ENCODE measurements at regions of chr3 and their contacts with region 1.

Region 1: DNA sequence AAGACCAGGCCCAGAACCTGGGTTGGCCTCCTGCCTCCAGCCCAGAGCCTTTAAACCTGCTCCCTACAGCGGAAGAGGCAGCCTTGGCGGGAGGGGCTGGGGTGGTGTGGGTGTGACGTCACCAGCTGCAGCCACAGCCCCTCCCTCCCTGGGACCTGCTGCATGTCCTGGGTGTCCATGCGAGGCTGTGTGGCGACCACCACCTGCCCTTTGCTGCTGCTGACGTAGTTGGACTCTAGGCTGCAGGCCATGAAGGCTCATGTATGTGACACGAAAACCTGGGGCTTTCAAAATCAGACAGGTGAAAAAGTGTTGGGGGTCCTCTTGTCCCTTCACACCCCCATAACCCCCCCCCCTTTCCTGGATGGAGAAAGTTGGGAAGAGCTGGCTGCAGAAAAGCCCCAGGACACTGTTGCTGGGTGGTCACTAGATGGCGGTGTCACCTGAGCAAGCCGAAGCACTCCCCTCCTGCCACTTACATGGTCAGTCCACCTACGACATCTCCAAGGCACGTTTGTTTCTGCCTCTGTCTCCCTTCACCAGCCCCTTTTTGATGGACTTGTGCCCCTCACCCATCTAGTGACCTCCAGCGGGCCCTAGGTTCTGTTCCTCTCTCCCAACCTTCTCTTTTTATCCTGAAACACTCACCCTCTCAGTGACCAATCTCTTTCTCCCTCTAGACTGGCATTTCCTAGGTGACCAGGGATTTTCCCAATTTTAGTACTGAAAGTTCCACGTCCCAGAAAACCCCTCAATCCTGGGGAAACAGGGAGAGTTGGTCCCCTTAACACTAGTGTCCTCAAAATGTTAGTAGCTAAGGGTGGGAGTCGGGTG is 35.2 kb downstream of the SLC6A20 start:
- DNase-seq: peak; percentile 87
- H3K4me3 ChIP-seq: no peak overlapping the region; a peak in 1 of 4 replicates
- H3K27ac ChIP-seq: no peak overlapping the region
- H3K4me1 ChIP-seq: no peaks in the 10 kb centered on the region; a peak in 1 of 4 replicates
- H3K27me3 ChIP-seq: no peaks in the 10 kb centered on the region; the same call in 1 of the 2 replicates
- CTCF ChIP-seq: peak; percentile 77
- EP300 ChIP-seq: no peak
- RAD21 ChIP-seq: peak; percentile 94

Region 2: GRCh38 chr3:45464336-45465170 is 296.5 kb before region 1 on chr3:
- CTCF ChIA-PET with region 1: no interaction called
- POLR2A ChIA-PET with region 1: no interaction called
- DNase-seq: no peak
- H3K4me3 ChIP-seq: no peak overlapping the region
- H3K27ac ChIP-seq: no peak overlapping the region
- H3K4me1 ChIP-seq: peaks cover 0 to 2% of the 10 kb centered on the region in 2 experiments; a peak in 1 of 4 replicates
- H3K27me3 ChIP-seq: no peaks in the 10 kb centered on the region
- CTCF ChIP-seq: no peak
- EP300 ChIP-seq: no peak
- RAD21 ChIP-seq: no peak

Region 3: DNA sequence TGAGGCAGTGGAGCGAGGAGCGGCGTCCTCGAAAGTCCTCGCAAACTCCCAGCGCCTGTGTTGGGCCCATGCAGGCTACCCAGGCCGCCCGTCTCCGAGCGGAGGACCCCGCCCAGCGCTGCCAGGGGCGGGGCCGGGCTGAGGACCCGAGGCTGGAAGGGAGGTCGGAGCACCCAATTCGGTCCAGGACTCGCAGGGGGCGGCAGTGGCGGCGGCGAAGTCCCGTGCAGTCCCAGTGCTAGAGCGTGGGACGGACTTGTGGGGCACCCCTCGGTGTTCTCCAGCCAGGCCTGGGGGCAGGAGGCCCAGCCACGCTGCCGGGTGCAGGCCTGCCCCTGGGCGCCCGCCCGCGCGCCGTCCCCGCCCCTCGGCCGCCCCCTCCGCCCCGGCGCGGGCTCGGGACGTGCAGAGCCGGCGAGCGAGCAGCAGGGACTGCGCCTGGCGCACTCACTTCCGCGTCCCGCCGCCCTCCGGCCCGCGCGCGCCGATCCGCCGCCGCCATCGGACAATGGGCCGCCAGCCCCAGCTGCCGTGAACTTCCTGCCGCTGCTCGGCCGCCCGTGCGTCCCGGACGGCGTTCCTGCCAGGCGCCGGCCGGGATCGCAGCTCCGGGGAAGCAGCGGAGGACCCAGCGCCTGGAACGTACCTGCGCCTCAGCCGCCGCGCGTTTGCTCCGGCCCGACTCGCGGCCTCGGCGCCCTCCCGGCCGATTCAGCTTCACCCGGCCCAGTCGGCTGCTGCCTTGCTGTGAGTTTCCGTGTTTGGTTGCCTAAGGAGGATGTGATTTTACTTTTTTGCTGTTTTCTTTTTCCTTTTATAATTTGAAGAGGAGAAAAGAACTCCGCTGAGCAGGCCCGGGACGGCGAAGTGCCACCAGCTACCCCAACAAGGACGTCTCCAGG is 167.1 kb before region 1 on chr3:
- CTCF ChIA-PET with region 1: no interaction called
- POLR2A ChIA-PET with region 1: no interaction called
- DNase-seq: peak; percentile 95
- H3K4me3 ChIP-seq: peak overlapping the region; percentile 78 to 81
- H3K27ac ChIP-seq: peak overlapping the region; percentile 83 to 84
- H3K4me1 ChIP-seq: peaks cover 15 to 38% of the 10 kb centered on the region in 2 experiments
- H3K27me3 ChIP-seq: no peaks in the 10 kb centered on the region
- CTCF ChIP-seq: no peak
- EP300 ChIP-seq: no peak
- RAD21 ChIP-seq: no peak

Region 4: GRCh38 chr3:45635477-45636256 is 125.4 kb before region 1 on chr3:
- CTCF ChIA-PET with region 1: no interaction called
- POLR2A ChIA-PET with region 1: no interaction called
- DNase-seq: no peak
- H3K4me3 ChIP-seq: no peak overlapping the region
- H3K27ac ChIP-seq: peak overlapping the region in 1 of 2 experiments; percentile 65; a peak in 2 of 4 replicates
- H3K4me1 ChIP-seq: peaks cover 9 to 11% of the 10 kb centered on the region in 2 experiments; a peak in 2 of 4 replicates
- H3K27me3 ChIP-seq: no peaks in the 10 kb centered on the region
- CTCF ChIP-seq: no peak
- EP300 ChIP-seq: no peak
- RAD21 ChIP-seq: no peak

Region 5: GRCh38 chr3:45773714-45774449 is 12.8 kb after region 1 on chr3:
- CTCF ChIA-PET with region 1: interaction called, 30 read pairs
- POLR2A ChIA-PET with region 1: no interaction called
- DNase-seq: no peak
- H3K4me3 ChIP-seq: no peak overlapping the region
- H3K27ac ChIP-seq: no peak overlapping the region
- H3K4me1 ChIP-seq: no peaks in the 10 kb centered on the region
- H3K27me3 ChIP-seq: peaks cover 20% of the 10 kb centered on the region; the same call in 1 of the 2 replicates
- CTCF ChIP-seq: no peak
- EP300 ChIP-seq: no peak
- RAD21 ChIP-seq: no peak

Region 6: GRCh38 chr3:45826321-45826720 is 65.2 kb after region 1 on chr3:
- CTCF ChIA-PET with region 1: interaction called, 42 read pairs
- POLR2A ChIA-PET with region 1: no interaction called
- DNase-seq: no peak
- H3K4me3 ChIP-seq: no peak overlapping the region
- H3K27ac ChIP-seq: no peak overlapping the region
- H3K4me1 ChIP-seq: no peaks in the 10 kb centered on the region
- H3K27me3 ChIP-seq: no peaks in the 10 kb centered on the region
- CTCF ChIP-seq: no peak
- EP300 ChIP-seq: no peak
- RAD21 ChIP-seq: no peak

Region 7: GRCh38 chr3:45841757-45842491 is 80.8 kb after region 1 on chr3 and contains the start of gene LZTFL1:
- CTCF ChIA-PET with region 1: interaction called, 20 read pairs
- POLR2A ChIA-PET with region 1: no interaction called
- DNase-seq: peak; percentile 90
- H3K4me3 ChIP-seq: peak within 1 kb of the TSS; percentile 89 to 95
- H3K27ac ChIP-seq: peak within 1 kb of the TSS; percentile 34 to 66; a peak in 3 of 4 replicates
- H3K4me1 ChIP-seq: peaks cover 0 to 10% of the 10 kb centered on the region in 2 experiments; a peak in 2 of 4 replicates
- H3K27me3 ChIP-seq: no peaks in the 10 kb centered on the region; the same call in 1 of the 2 replicates
- CTCF ChIP-seq: no peak
- EP300 ChIP-seq: no peak
- RAD21 ChIP-seq: no peak
- polyA plus RNA-seq, gene LZTFL1: 11.9 and 19.7 TPM in 2 replicates

Region 8: DNA sequence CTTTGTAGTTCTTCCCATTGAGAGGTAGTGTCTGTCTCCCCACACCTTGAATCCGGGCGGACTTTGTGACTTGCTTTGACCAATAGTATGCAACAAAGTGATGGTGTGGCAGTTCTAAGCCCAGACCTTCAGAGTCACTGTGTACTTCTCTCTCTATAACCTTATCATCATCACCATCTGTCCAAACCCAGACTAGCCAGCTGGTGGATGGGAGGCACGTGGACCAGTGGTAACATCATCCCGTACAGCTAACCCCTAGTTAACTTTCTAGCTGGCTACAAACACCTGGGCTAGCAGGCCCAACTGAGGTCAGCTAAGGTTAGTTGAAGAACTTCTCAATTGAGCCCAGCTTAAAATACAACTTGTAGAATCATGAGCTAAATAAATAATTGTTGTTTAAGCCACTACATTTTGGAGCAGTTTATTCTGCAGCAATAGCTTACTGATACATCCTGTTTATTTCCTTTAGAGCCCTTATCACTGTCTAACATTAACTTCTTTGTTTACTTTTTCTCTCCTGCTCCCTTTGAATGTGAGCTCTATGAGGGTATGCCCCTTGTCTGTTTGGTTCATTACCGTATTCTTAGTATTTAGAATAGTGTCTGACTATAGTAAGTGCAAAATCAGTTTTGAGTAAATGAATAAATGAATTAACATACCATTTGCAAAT is 113.7 kb after region 1 on chr3:
- CTCF ChIA-PET with region 1: no interaction called
- POLR2A ChIA-PET with region 1: no interaction called
- DNase-seq: no peak
- H3K4me3 ChIP-seq: no peak overlapping the region
- H3K27ac ChIP-seq: no peak overlapping the region
- H3K4me1 ChIP-seq: peaks cover 0 to 5% of the 10 kb centered on the region in 2 experiments; a peak in 1 of 4 replicates
- H3K27me3 ChIP-seq: no peaks in the 10 kb centered on the region; the same call in 1 of the 2 replicates
- CTCF ChIP-seq: no peak
- EP300 ChIP-seq: no peak
- RAD21 ChIP-seq: no peak

Region 9: DNA sequence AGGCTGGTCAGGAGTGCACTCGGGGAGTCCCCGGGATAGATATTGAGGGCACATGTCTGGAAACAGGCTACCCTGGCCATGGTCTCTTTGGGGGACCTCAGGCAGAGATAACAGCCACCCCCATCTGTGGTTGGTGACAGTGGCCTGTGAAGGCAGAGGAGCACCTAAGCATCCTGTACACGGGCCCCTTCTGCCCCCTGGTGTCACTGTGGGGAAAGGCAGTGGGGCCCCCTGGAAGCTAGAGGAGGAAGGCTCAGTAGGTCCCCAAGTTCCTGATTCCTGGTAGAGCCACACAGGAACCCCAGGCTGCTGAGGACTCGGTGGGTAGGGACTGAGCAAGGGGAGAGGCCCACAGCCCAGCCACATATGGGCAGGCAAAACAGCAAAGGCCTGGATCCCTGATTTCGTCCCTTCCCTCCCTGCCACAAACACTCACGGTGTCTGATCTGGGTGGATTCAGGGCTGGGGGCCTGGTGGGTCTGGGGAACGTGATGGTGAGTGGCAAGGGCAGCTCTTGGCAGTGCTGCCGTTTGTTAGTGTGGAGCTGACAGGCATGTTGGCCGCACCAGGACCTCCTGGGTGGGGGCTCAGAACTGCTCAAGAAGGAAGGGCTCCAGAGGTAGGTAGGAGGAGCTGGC is 168.1 kb after region 1 on chr3:
- CTCF ChIA-PET with region 1: interaction called, 142 read pairs
- POLR2A ChIA-PET with region 1: no interaction called
- DNase-seq: peak; percentile 84
- H3K4me3 ChIP-seq: no peak overlapping the region; a peak in 1 of 4 replicates
- H3K27ac ChIP-seq: no peak overlapping the region
- H3K4me1 ChIP-seq: no peaks in the 10 kb centered on the region; a peak in 1 of 4 replicates
- H3K27me3 ChIP-seq: no peaks in the 10 kb centered on the region
- CTCF ChIP-seq: peak; percentile 78
- EP300 ChIP-seq: no peak
- RAD21 ChIP-seq: peak; percentile 88